AG04450 (cell line): ENCODE measurements at regions of chr14 and their contacts with region 1.

Region 1: DNA sequence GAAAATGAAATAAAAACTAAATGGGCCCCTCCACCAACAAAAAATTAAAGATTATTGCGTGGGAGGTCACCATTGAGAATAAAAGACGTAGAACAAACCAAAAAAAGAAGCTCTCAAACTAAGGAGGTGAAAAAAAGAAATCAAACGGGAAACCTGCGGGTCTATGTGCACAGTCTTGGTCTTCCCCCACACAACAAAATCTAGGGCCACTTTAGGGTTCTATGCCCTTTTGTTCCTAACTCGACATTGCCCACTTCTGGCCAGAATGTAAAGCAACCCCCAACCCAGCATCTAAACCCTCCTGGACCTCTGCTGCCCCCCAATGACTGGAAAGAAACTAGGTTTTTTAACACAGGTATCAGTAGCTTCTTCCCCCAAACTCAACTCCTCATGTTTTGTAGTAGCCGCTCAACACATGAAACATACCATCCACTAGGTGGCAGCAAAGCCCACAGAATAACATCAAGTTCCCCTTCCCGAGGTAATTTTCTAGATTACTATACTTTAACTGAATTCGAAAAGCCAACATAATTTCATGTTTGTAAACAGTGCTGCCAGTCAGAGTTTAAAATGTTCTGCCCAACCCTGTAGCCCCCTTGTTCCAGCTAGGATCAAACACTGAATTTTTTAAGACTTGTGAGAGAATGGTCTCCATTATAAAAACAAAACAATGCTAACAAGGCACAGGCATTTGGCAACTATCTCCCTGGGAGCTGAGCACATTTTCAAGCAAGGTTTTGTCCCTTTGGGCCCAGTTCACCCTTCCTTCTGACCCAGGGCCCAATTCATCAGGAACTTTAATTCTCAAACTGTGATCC is 18.7 kb downstream of the DAD1 start:
- DNase-seq: no peak
- H3K4me3 ChIP-seq: no peak overlapping the region
- H3K27ac ChIP-seq: no peak overlapping the region
- H3K27me3 ChIP-seq: no peaks in the 10 kb centered on the region
- CTCF ChIP-seq: peak; percentile 68

Region 2: GRCh38 chr14:22276913-22277816 is 293.2 kb before region 1 on chr14:
- CTCF ChIA-PET with region 1: no interaction called
- POLR2A ChIA-PET with region 1: no interaction called
- DNase-seq: no peak
- H3K4me3 ChIP-seq: no peak overlapping the region
- H3K27ac ChIP-seq: no peak overlapping the region
- H3K27me3 ChIP-seq: peaks cover 5% of the 10 kb centered on the region
- CTCF ChIP-seq: peak; percentile 71

Region 3: DNA sequence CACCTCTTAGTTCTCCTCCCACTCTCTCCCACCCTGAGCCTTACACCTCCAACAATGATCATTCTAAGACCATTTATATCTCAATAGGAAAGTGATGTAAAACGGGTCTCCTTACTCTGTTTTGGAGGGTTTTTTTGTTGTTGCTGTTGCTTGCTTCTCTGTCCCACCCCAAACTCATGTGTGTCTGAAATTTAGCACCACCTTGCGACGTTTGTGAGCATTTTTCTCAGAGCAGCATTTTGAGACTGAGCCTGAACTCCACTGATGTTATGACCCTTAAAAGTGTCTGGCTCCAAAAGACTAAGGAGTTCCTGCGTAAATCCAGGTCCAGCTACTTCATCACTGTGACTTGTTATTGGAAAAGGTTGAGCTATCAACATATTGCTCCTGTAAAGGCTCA is 136.3 kb before region 1 on chr14:
- CTCF ChIA-PET with region 1: no interaction called
- POLR2A ChIA-PET with region 1: no interaction called
- DNase-seq: no peak
- H3K4me3 ChIP-seq: no peak overlapping the region
- H3K27ac ChIP-seq: no peak overlapping the region
- H3K27me3 ChIP-seq: peaks cover 35% of the 10 kb centered on the region
- CTCF ChIP-seq: peak; percentile 16; the same call in 1 of the 2 replicates

Region 4: DNA sequence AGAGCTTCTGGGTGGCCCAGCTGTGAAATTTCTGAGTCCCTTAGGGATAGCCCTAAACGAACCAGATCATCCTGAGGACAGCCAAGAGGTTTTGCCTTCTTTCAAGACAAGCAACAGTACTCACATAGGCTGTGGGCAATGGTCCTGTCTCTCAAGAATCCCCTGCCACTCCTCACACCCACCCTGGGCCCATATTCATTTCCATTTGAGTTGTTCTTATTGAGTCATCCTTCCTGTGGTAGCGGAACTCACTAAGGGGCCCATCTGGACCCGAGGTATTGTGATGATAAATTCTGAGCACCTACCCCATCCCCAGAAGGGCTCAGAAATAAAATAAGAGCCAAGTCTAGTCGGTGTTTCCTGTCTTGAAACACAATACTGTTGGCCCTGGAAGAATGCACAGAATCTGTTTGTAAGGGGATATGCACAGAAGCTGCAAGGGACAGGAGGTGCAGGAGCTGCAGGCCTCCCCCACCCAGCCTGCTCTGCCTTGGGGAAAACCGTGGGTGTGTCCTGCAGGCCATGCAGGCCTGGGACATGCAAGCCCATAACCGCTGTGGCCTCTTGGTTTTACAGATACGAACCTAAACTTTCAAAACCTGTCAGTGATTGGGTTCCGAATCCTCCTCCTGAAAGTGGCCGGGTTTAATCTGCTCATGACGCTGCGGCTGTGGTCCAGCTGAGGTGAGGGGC is 20.2 kb before region 1 on chr14:
- CTCF ChIA-PET with region 1: interaction called, 72 read pairs
- POLR2A ChIA-PET with region 1: no interaction called
- DNase-seq: peak; percentile 16
- H3K4me3 ChIP-seq: no peak overlapping the region
- H3K27ac ChIP-seq: no peak overlapping the region
- H3K27me3 ChIP-seq: no peaks in the 10 kb centered on the region
- CTCF ChIP-seq: no peak

Region 5: GRCh38 chr14:22598099-22598899 is 28.0 kb after region 1 on chr14 and contains the start of gene ABHD4:
- CTCF ChIA-PET with region 1: interaction called, 21 read pairs
- POLR2A ChIA-PET with region 1: no interaction called
- DNase-seq: no peak
- H3K4me3 ChIP-seq: peak within 1 kb of the TSS; percentile 97
- H3K27ac ChIP-seq: peak within 1 kb of the TSS; percentile 89
- H3K27me3 ChIP-seq: no peaks in the 10 kb centered on the region
- CTCF ChIP-seq: no peak
- polyA plus RNA-seq, gene ABHD4: 42.1 and 49.4 TPM in 2 replicates

Region 6: DNA sequence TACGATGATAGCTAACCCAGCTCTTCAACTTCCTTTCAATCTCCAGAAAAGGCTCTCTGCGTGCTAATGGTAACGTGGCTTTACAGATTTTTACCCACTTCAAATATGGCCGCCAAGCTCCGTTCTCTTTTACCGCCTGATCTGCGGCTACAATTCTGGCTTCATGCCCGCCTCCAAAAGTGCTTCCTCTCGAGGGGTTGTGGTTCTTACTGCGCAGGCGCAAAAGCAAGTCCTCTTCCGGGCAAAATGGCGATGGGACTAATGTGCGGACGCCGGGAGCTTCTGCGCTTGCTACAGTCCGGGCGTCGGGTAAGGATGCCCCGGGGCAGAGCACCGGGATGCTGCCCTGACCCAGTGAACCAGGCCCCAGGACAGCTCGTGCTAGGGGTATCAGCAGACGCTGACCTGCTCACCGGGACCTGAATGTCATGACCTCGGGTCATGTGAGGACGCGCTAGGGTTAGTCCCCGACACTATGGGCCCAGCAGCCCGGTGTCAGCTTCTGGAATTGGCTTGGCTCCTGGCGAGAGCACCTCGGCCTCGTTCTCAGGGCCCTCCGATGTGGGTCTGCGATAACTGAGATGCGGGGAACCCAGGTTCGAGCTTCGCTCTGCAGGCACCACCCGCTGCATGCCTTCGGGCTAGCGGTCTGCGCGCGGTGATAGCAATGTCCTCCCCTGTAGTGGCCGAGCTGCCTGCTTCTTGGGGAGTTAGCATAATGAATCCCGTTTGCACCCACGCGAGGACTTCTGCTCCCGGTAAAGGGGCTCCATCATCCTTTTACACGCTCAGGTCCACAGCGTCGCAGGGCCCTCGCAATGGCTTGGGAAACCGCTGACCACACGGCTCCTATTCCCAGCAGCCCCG is 196.3 kb after region 1 on chr14 and contains the start of gene OXA1L:
- CTCF ChIA-PET with region 1: interaction called, 34 read pairs
- POLR2A ChIA-PET with region 1: no interaction called
- DNase-seq: peak; percentile 95
- H3K4me3 ChIP-seq: peak within 1 kb of the TSS; percentile 100
- H3K27ac ChIP-seq: peak within 1 kb of the TSS; percentile 78
- H3K27me3 ChIP-seq: no peaks in the 10 kb centered on the region
- CTCF ChIP-seq: no peak
- polyA plus RNA-seq, gene OXA1L: 181 and 198 TPM in 2 replicates

Region 7: GRCh38 chr14:22802860-22803686 is 232.7 kb after region 1 on chr14:
- CTCF ChIA-PET with region 1: no interaction called
- POLR2A ChIA-PET with region 1: no interaction called
- DNase-seq: no peak
- H3K4me3 ChIP-seq: no peak overlapping the region
- H3K27ac ChIP-seq: no peak overlapping the region
- H3K27me3 ChIP-seq: no peaks in the 10 kb centered on the region
- CTCF ChIP-seq: no peak

Region 8: DNA sequence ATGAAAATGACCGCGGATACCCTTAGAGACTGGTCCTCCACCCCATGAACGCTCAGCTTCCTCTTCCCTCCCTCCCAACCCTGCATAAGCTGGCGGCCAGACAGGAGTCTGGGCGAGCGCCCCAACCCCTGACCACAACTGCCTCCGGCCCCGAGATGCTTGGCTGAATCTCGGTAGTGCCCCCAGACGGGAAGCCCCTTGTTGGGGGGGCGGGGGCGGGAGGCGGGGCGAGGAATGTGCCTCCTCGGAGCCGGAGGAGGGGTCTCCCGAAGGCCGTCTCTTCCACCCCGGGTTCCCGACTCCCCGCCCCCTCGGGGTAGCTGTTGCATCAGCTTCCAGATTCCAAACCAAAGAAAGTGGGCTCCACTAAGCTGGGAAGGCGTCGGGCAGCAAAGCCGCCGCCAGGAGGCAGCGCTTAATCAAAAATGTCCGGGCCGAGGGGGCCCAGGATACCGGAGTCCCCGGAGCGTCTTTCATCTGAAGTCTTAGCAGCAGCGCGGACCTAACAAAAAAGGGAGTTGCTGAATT is 252.3 kb after region 1 on chr14:
- CTCF ChIA-PET with region 1: interaction called, 37 read pairs
- POLR2A ChIA-PET with region 1: no interaction called
- DNase-seq: peak; percentile 62
- H3K4me3 ChIP-seq: peak overlapping the region; percentile 34
- H3K27ac ChIP-seq: peak overlapping the region; percentile 65
- H3K27me3 ChIP-seq: no peaks in the 10 kb centered on the region
- CTCF ChIP-seq: peak; percentile 87

Region 9: DNA sequence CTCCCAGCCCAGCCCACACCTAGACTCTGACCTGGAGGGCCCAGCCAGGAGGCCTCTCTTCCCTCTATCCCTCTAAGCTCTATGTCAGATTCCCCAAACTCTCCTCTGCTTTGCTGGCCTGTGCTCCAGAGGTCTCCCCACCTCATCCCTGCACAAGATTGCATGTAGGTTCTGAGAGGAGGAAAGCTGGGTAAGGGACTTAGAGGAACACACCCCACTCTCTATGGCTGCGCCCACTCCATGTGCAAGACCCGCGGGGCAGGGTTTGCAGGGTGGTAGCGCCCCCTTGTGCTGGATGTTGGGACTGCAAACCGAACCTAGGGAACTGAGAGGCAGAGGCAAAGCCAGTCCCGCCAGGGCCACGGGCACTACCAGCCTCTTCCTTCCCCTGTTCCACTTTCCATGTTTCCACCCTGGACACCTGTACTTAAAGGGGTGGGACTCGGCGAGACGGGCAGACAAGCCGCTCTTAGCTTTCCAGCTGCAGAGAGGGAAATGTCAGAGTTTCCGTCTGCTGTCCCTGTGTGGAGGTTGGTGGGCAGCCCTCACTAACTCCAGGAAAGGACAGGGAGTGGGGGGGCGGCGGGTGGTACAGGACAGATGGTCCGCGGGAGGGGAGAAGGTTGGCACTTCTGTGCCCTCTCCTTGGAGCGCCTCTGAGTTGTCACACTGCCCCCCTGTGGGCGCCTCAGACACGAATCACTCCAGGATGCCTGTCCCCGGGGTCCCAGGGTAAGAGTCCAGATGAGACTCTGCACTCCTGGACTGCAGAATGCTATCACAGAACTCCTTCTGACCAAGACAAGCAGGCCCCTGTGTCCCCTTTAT is 282.8 kb after region 1 on chr14:
- CTCF ChIA-PET with region 1: interaction called, 62 read pairs
- POLR2A ChIA-PET with region 1: interaction called, 4 read pairs
- DNase-seq: no peak
- H3K4me3 ChIP-seq: peak overlapping the region; percentile 56
- H3K27ac ChIP-seq: peak overlapping the region; percentile 52
- H3K27me3 ChIP-seq: no peaks in the 10 kb centered on the region
- CTCF ChIP-seq: peak; percentile 91